ENCODE measurements at regions of chr13 and their contacts with region 1.

Region 1: DNA sequence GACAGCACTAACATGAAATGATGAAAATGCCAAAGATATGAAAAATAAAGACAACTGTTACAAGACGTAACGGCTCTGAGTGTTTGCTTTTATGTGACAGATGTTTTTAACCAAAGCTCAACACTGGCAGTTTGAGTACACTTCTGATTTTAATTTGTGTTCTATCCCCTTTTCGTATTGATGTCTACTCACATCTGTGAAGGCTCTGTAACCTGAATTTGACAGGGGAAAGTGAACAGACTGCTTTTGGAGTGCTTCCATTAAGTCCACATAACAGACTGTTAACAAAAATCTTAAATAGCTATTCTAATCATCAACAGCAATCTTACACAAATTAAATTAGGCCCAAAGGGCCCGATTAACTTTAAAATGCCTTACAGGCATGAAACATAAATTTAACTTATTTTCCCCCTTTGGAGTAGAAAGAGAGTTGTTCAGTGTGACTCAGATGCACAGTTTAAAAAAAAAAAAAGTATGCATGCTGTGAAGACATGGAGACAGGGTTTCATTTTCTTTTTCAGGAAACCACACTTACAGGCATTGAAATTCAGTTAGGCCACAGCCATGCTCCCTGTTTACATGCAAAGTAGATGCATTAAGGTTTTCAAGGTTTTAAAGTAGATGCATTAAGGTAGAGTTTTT is 16.3 kb upstream of the RNASEH2B start:
- DNase-seq: no peak
- H3K4me3 Mint-ChIP-seq: peak overlapping the region; percentile 51
- H3K27ac Mint-ChIP-seq: peak overlapping the region; percentile 88
- H3K4me1 Mint-ChIP-seq: peaks cover 48% of the 10 kb centered on the region
- H3K27me3 Mint-ChIP-seq: no peaks in the 10 kb centered on the region

Region 2: GRCh38 chr13:50831512-50831911 is 61.8 kb before region 1 on chr13:
- intact Hi-C with region 1: loop called (anchors 1 kb)
- DNase-seq: no peak
- H3K4me3 Mint-ChIP-seq: no peak overlapping the region
- H3K27ac Mint-ChIP-seq: no peak overlapping the region
- H3K4me1 Mint-ChIP-seq: peaks cover 12% of the 10 kb centered on the region
- H3K27me3 Mint-ChIP-seq: peaks cover 22% of the 10 kb centered on the region

Measured in activated T-helper 2 cell treated with anti-CD3 and anti-CD28 coated beads, Interferon-gamma antibody, Interleukin-2, Interleukin-4, amounts not matched to agents 10 μg/mL and 5 μg/mL and 100 μg/mL, durations not matched to agents 14 hours and 24 hours and 36 hours (primary cell).